Naive thymus-derived CD4-positive, alpha-beta T cell (primary cell): ENCODE measurements at regions of chr6 and their contacts with region 1.

Region 1: GRCh38 chr6:7389451-7390225 is at the starts of genes CAGE1 and RIOK1:
- DNase-seq: peak; percentile 92 to 96 (median 94)
- ATAC-seq: peak; percentile 94
- H3K4me3 ChIP-seq: peak within 1 kb of the TSS; percentile 95
- H3K4me3 Mint-ChIP-seq: peak within 1 kb of the TSS; percentile 87 to 97 (median 94)
- H3K27ac ChIP-seq: peak within 1 kb of the TSS; percentile 85
- H3K27ac Mint-ChIP-seq: peak within 1 kb of the TSS; percentile 96 to 100 (median 99)
- H3K4me1 ChIP-seq: peaks cover 20 to 21% of the 10 kb centered on the region in 2 donors
- H3K4me1 Mint-ChIP-seq: peaks cover 31 to 56% (median 50%) of the 10 kb centered on the region in 7 donors
- H3K27me3 ChIP-seq: no peaks in the 10 kb centered on the region
- H3K27me3 Mint-ChIP-seq: no peaks in the 10 kb centered on the region
- total RNA-seq, gene CAGE1: 0.16 to 0.48 (median 0.22) TPM
- total RNA-seq, gene RIOK1: 24.4 to 39.9 (median 27.6) TPM

Region 2: GRCh38 chr6:6811151-6812002 is 578.3 kb before region 1 on chr6:
- CTCF ChIA-PET with region 1: no interaction called
- POLR2A ChIA-PET with region 1: no interaction called
- intact Hi-C with region 1: loop called in 1 of 2 experiments (anchors 1 kb)
- DNase-seq: peak in 7 of 9 donors; percentile 54 to 90 (median 73)
- ATAC-seq: peak; percentile 79
- H3K4me3 ChIP-seq: peak overlapping the region; percentile 57
- H3K4me3 Mint-ChIP-seq: peak overlapping the region; percentile 80 to 97 (median 95)
- H3K27ac ChIP-seq: peak overlapping the region; percentile 85
- H3K27ac Mint-ChIP-seq: peak overlapping the region; percentile 86 to 100 (median 99)
- H3K4me1 ChIP-seq: no peaks in the 10 kb centered on the region
- H3K4me1 Mint-ChIP-seq: peaks cover 10 to 28% (median 23%) of the 10 kb centered on the region in 7 donors
- H3K27me3 ChIP-seq: no peaks in the 10 kb centered on the region
- H3K27me3 Mint-ChIP-seq: peaks cover 0 to 35% (median 0%) of the 10 kb centered on the region in 5 donors

Region 3: DNA sequence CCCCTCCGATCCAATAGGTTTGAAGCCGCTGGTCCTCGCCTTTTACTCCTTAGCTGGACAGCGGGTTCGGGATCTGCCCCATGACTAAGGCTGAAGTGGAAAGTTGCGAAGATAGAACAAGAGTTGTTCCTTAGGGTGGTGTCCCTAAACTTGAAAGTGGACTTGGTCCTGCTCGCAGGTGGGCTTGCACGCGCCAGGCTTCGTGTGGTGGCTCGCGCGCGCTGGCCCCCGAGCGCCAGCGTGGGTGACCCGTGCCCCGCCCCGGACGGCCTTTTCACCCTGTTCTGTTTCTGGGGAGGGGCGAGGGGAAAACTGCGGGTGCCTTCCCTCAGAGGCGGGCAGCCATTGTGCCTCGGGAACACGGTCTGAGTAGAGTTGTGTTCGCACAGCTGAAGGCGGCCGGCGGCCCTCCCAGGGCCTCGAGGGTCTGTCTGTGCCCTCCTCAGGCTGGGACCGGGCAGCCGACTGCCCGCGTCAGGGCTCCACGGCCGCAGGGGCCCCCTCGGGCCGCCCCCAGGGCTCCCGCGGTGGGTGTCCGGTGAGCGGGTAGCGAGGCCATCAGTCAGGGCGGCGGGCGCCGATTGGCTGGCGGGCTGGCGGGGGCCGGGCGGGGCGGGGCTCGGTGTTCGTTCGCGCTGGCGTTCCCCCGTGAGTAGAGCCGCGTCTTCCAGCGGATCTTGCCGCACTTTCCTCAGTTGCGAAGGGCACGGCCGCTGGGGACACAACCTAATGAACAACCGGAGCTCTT is 248.8 kb before region 1 on chr6:
- CTCF ChIA-PET with region 1: no interaction called
- POLR2A ChIA-PET with region 1: interaction called, 3 read pairs
- intact Hi-C with region 1: loop called in 1 of 2 experiments (anchors 5 kb)
- DNase-seq: peak; percentile 69 to 86 (median 78)
- ATAC-seq: peak; percentile 89
- H3K4me3 ChIP-seq: peak overlapping the region; percentile 73
- H3K4me3 Mint-ChIP-seq: peak overlapping the region; percentile 80 to 92 (median 88)
- H3K27ac ChIP-seq: peak overlapping the region; percentile 91
- H3K27ac Mint-ChIP-seq: peak overlapping the region; percentile 85 to 99 (median 96)
- H3K4me1 ChIP-seq: peaks cover 22 to 51% of the 10 kb centered on the region in 2 donors
- H3K4me1 Mint-ChIP-seq: peaks cover 45 to 91% (median 85%) of the 10 kb centered on the region in 7 donors
- H3K27me3 ChIP-seq: no peaks in the 10 kb centered on the region
- H3K27me3 Mint-ChIP-seq: no peaks in the 10 kb centered on the region

Region 4: GRCh38 chr6:7312616-7313504 is 76.8 kb before region 1 on chr6 and contains the start of gene SSR1:
- CTCF ChIA-PET with region 1: interaction called, 3 read pairs
- POLR2A ChIA-PET with region 1: interaction called, 12 read pairs
- intact Hi-C with region 1: loop called (anchors 1 kb)
- DNase-seq: peak; percentile 76 to 97 (median 84)
- ATAC-seq: peak; percentile 99
- H3K4me3 ChIP-seq: peak within 1 kb of the TSS; percentile 66
- H3K4me3 Mint-ChIP-seq: peak within 1 kb of the TSS; percentile 83 to 99 (median 94)
- H3K27ac ChIP-seq: peak within 1 kb of the TSS; percentile 76
- H3K27ac Mint-ChIP-seq: peak within 1 kb of the TSS; percentile 87 to 93 (median 92)
- H3K4me1 ChIP-seq: peaks cover 6 to 27% of the 10 kb centered on the region in 2 donors
- H3K4me1 Mint-ChIP-seq: peaks cover 31 to 65% (median 50%) of the 10 kb centered on the region in 7 donors
- H3K27me3 ChIP-seq: no peaks in the 10 kb centered on the region
- H3K27me3 Mint-ChIP-seq: no peaks in the 10 kb centered on the region
- total RNA-seq, gene SSR1: 75.0 to 178 (median 127) TPM

Region 5: GRCh38 chr6:7502743-7503142 is 113.1 kb after region 1 on chr6:
- CTCF ChIA-PET with region 1: no interaction called
- POLR2A ChIA-PET with region 1: no interaction called
- intact Hi-C with region 1: no loop called
- DNase-seq: no peak
- ATAC-seq: no peak
- H3K4me3 ChIP-seq: no peak overlapping the region
- H3K4me3 Mint-ChIP-seq: no peak overlapping the region
- H3K27ac ChIP-seq: no peak overlapping the region
- H3K27ac Mint-ChIP-seq: no peak overlapping the region
- H3K4me1 ChIP-seq: no peaks in the 10 kb centered on the region
- H3K4me1 Mint-ChIP-seq: no peaks in the 10 kb centered on the region
- H3K27me3 ChIP-seq: no peaks in the 10 kb centered on the region
- H3K27me3 Mint-ChIP-seq: peaks cover 4 to 16% (median 9%) of the 10 kb centered on the region in 5 donors

Region 6: DNA sequence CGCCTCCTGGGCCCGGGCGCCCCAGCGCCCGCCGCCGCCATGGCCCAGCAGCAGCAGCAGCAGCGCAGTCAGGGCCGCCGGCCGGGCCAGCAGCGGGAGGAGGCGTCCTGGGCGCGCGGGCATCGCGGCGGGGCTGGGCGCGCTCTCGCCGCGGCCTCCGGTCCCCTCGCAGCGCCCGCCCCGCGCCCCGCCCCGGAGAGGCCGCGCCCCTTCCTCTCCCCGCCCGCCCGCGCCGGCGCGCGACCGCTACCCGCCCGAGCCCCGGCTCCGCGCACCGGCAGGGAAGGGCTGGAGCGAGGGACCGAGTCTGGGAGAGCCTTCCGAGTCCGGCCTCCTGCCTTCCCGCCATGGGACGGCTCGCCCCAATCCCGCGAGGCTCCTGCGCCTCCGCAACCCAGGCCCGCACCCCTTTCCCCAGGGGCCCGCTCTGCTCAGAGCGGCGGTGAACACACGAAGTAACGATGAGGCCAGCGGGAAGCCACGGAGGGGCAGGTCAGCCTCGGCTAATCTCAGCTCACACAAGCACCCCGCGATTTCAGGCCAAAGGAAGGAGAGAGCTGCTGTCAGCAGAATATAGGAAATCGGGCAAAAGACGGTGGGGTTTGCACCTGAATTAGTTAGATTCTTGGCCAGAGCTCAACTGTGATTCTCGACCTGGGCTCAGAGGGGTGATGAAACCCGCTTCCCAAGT is 521.2 kb after region 1 on chr6 and contains the start of gene TXNDC5:
- CTCF ChIA-PET with region 1: no interaction called
- POLR2A ChIA-PET with region 1: no interaction called
- intact Hi-C with region 1: loop called in 1 of 2 experiments (anchors 1 kb)
- DNase-seq: peak; percentile 35 to 82 (median 55)
- ATAC-seq: peak; percentile 91
- H3K4me3 ChIP-seq: peak within 1 kb of the TSS; percentile 76
- H3K4me3 Mint-ChIP-seq: peak within 1 kb of the TSS in 9 of 10 donors; percentile 68 to 89 (median 78)
- H3K27ac ChIP-seq: peak within 1 kb of the TSS; percentile 46
- H3K27ac Mint-ChIP-seq: peak within 1 kb of the TSS in 5 of 9 donors; percentile 3 to 76 (median 27)
- H3K4me1 ChIP-seq: peaks cover 6 to 16% of the 10 kb centered on the region in 2 donors
- H3K4me1 Mint-ChIP-seq: peaks cover 4 to 18% (median 6%) of the 10 kb centered on the region in 7 donors
- H3K27me3 ChIP-seq: no peaks in the 10 kb centered on the region
- H3K27me3 Mint-ChIP-seq: no peaks in the 10 kb centered on the region
- total RNA-seq, gene TXNDC5: 11.5 to 48.6 (median 34.8) TPM

Region 7: DNA sequence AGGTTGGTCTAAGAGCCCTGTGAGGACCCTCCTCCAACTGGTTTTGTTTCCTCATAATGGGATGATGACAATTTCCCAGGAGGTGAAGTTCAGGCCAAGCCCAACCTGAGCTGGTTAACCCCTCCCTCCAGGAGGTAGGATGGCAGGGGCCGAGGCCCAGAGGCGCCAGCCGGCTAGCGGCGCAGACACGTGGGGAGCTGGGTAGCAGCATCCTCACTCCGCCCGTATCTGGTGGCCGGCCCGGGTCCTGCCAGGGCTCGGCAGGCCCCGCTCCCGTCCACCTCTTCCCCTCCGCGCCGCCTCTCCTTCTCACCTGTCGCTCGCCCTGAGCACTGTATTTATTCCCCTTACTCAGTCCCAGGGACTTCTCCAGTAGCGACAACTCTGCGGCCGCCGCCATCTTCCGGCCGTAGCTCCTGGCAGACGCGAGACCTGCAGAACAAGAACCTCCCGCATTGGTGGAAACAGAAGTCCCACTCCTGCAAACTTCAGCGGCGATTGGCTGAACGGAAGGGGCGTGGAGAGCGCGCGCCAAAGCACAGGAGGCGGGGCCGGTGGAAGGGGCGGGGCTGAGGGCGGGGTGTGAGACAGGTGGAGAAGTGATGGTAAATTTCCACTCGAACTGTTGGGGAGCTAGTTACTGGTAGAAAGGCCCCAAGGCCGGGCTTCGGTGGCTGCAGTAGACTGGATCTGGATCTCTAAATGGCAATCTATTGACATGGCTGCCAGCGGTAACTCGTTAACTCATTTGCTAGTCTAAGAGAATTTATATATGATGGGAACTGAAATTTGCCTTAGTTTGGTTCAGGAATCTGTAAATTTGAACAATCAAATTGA is 712.7 kb after region 1 on chr6 and contains the start of gene EEF1E1:
- CTCF ChIA-PET with region 1: no interaction called
- POLR2A ChIA-PET with region 1: interaction called, 4 read pairs
- intact Hi-C with region 1: loop called (anchors 1 to 2 kb)
- DNase-seq: peak; percentile 77 to 97 (median 92)
- ATAC-seq: peak; percentile 100
- H3K4me3 ChIP-seq: peak within 1 kb of the TSS; percentile 75
- H3K4me3 Mint-ChIP-seq: peak within 1 kb of the TSS; percentile 85 to 100 (median 98)
- H3K27ac ChIP-seq: peak within 1 kb of the TSS; percentile 78
- H3K27ac Mint-ChIP-seq: peak within 1 kb of the TSS; percentile 91 to 99 (median 95)
- H3K4me1 ChIP-seq: peaks cover 6 to 8% of the 10 kb centered on the region in 2 donors
- H3K4me1 Mint-ChIP-seq: peaks cover 21 to 43% (median 34%) of the 10 kb centered on the region in 7 donors
- H3K27me3 ChIP-seq: no peaks in the 10 kb centered on the region
- H3K27me3 Mint-ChIP-seq: peaks cover 13 to 27% (median 18%) of the 10 kb centered on the region in 5 donors
- total RNA-seq, gene EEF1E1: 10.2 to 41.0 (median 21.0) TPM